A673 (cell line): ENCODE measurements at regions of chr5 and their contacts with region 1.

Region 1: GRCh38 chr5:150449517-150450339 is at the start of gene RPS14:
- DNase-seq: peak; percentile 95
- H3K4me3 ChIP-seq: peak within 1 kb of the TSS; percentile 75
- H3K27ac ChIP-seq: peak within 1 kb of the TSS; percentile 96
- H3K4me1 ChIP-seq: peaks cover 19% of the 10 kb centered on the region
- H3K27me3 ChIP-seq: no peaks in the 10 kb centered on the region
- CTCF ChIP-seq: peak; percentile 93
- total RNA-seq, gene RPS14: 1,789 and 1,909 TPM in 2 replicates

Region 2: DNA sequence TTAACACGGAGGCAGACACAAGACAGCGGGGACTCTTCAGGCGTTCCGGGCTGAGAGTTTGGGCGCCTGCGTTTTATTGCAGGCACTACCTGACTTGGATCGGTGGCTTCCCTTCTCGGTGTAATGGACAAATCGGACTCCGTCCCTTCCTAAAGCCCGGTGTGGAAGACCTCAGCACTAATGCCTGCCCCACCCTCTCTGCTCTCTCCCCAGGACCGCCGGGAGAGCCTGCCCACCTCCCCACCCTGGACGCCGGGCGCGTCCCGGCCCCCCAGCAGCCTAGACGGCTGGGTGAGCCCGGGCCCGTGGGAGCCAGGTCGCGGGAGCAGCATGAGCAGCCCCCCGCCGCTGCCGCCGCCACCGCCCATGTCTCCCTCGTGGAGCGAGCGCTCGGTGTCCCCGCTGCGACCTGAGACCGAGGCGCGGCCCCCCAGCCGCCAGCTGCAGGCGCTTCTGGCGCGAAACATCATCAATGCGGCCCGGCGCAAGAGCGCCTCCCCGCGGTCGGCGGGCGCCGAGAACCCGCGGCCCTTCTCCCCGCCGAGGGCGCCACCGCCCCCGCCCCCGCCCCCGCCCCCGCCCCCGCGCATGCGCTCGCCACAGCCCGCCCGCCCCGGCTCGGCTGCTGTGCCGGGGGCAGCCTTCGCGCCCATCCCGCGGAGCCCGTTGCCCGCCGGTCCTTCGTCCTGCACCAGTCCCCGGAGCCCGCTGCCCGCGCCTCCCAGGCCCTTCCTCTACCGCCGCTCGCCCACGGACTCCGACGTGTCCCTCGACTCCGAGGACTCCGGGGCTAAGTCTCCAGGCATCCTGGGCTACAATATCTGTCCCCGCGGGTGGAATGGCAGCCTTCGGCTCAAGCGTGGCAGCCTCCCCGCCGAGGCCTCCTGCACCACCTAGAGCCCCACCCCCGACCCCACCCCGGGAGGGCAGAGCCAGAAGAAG is 206.7 kb after region 1 on chr5:
- CTCF ChIA-PET with region 1: interaction called, 3 read pairs
- POLR2A ChIA-PET with region 1: no interaction called
- intact Hi-C with region 1: loop called (anchors 10 kb)
- DNase-seq: peak; percentile 83
- H3K4me3 ChIP-seq: peak overlapping the region; percentile 66
- H3K27ac ChIP-seq: peak overlapping the region; percentile 73
- H3K4me1 ChIP-seq: peaks cover 9% of the 10 kb centered on the region
- H3K27me3 ChIP-seq: no peaks in the 10 kb centered on the region
- CTCF ChIP-seq: peak; percentile 54

Region 3: GRCh38 chr5:150700594-150701293 is 251.0 kb after region 1 on chr5 and contains the start of gene RBM22:
- CTCF ChIA-PET with region 1: no interaction called
- POLR2A ChIA-PET with region 1: no interaction called
- intact Hi-C with region 1: loop called (anchors 10 kb)
- DNase-seq: peak; percentile 95
- H3K4me3 ChIP-seq: peak within 1 kb of the TSS; percentile 83
- H3K27ac ChIP-seq: peak within 1 kb of the TSS; percentile 92
- H3K4me1 ChIP-seq: peaks cover 14% of the 10 kb centered on the region
- H3K27me3 ChIP-seq: no peaks in the 10 kb centered on the region
- CTCF ChIP-seq: peak; percentile 74
- total RNA-seq, gene RBM22: 58.7 and 66.8 TPM in 2 replicates